CD4-positive, alpha-beta memory T cell (primary cell): ENCODE measurements at regions of chr18 and their contacts with region 1.

Region 1: DNA sequence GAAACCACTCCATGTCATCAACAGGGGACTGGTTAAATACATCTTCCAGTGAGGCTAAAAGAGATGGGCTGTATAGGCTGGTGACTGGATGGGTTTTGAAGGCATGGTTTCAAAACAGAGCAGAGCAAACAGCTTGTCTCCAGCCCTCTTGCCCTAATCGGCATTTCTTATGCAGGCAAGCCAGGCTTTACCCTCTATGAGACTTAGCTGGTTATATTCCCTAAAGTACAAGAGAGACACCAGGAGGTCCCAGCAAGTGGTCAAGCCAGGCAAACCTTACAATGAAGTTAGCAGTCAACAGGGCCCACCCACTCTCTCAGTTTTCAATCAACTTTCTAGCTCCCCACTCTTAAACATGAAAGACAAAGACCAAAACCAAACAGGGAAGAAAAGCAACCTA is 19.0 kb downstream of the OSBPL1A start:
- DNase-seq: no peak
- H3K4me3 ChIP-seq: no peak overlapping the region
- H3K4me3 Mint-ChIP-seq: no peak overlapping the region
- H3K27ac ChIP-seq: no peak overlapping the region
- H3K27ac Mint-ChIP-seq: no peak overlapping the region
- H3K4me1 ChIP-seq: no peaks in the 10 kb centered on the region
- H3K4me1 Mint-ChIP-seq: peaks cover 0 to 3% (median 0%) of the 10 kb centered on the region in 4 donors
- H3K27me3 ChIP-seq: no peaks in the 10 kb centered on the region
- H3K27me3 Mint-ChIP-seq: no peaks in the 10 kb centered on the region

Region 2: GRCh38 chr18:24306201-24306600 is 72.4 kb before region 1 on chr18:
- CTCF ChIA-PET with region 1: no interaction called
- POLR2A ChIA-PET with region 1: no interaction called
- intact Hi-C with region 1: no loop called
- DNase-seq: no peak
- H3K4me3 ChIP-seq: no peak overlapping the region
- H3K4me3 Mint-ChIP-seq: no peak overlapping the region
- H3K27ac ChIP-seq: no peak overlapping the region
- H3K27ac Mint-ChIP-seq: no peak overlapping the region
- H3K4me1 ChIP-seq: no peaks in the 10 kb centered on the region
- H3K4me1 Mint-ChIP-seq: no peaks in the 10 kb centered on the region
- H3K27me3 ChIP-seq: no peaks in the 10 kb centered on the region
- H3K27me3 Mint-ChIP-seq: peaks cover 0 to 1% of the 10 kb centered on the region in 2 donors

Region 3: DNA sequence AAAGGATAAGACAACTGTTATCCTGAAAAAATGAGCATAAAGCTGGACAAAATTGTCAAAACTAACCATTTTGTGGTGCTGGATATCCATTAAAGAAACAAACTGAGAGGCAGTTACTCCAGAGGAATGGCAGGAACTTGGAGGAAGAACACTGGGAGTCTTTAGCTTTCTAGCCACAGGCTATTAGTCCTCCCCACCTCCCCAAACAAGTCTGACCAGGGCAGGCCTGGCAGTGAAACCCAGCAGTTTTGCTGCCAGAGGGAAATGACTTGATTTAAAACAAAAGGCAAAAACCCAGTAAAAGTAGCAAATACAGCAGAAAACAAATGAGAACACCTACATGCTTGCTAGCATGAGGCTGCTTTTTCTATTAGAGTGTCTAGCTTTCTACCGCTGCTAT is 15.8 kb before region 1 on chr18:
- CTCF ChIA-PET with region 1: interaction called, 15 read pairs
- POLR2A ChIA-PET with region 1: no interaction called
- intact Hi-C with region 1: no loop called
- DNase-seq: no peak
- H3K4me3 ChIP-seq: no peak overlapping the region
- H3K4me3 Mint-ChIP-seq: no peak overlapping the region
- H3K27ac ChIP-seq: no peak overlapping the region
- H3K27ac Mint-ChIP-seq: no peak overlapping the region
- H3K4me1 ChIP-seq: no peaks in the 10 kb centered on the region
- H3K4me1 Mint-ChIP-seq: no peaks in the 10 kb centered on the region
- H3K27me3 ChIP-seq: no peaks in the 10 kb centered on the region
- H3K27me3 Mint-ChIP-seq: no peaks in the 10 kb centered on the region

Region 4: GRCh38 chr18:24395049-24395795 is 16.6 kb after region 1 on chr18:
- CTCF ChIA-PET with region 1: no interaction called
- POLR2A ChIA-PET with region 1: no interaction called
- intact Hi-C with region 1: no loop called
- DNase-seq: no peak
- H3K4me3 ChIP-seq: no peak overlapping the region
- H3K4me3 Mint-ChIP-seq: peak overlapping the region in 2 of 8 donors; percentile 12 to 30
- H3K27ac ChIP-seq: no peak overlapping the region
- H3K27ac Mint-ChIP-seq: peak overlapping the region in 2 of 7 donors; percentile 13 to 57
- H3K4me1 ChIP-seq: peaks cover 12% of the 10 kb centered on the region
- H3K4me1 Mint-ChIP-seq: peaks cover 6 to 16% (median 13%) of the 10 kb centered on the region in 4 donors
- H3K27me3 ChIP-seq: no peaks in the 10 kb centered on the region
- H3K27me3 Mint-ChIP-seq: peaks cover 0 to 12% of the 10 kb centered on the region in 2 donors

Region 5: GRCh38 chr18:24413148-24413547 is 34.5 kb after region 1 on chr18:
- CTCF ChIA-PET with region 1: no interaction called
- POLR2A ChIA-PET with region 1: no interaction called
- intact Hi-C with region 1: no loop called
- DNase-seq: no peak
- H3K4me3 ChIP-seq: no peak overlapping the region
- H3K4me3 Mint-ChIP-seq: no peak overlapping the region
- H3K27ac ChIP-seq: no peak overlapping the region
- H3K27ac Mint-ChIP-seq: no peak overlapping the region
- H3K4me1 ChIP-seq: no peaks in the 10 kb centered on the region
- H3K4me1 Mint-ChIP-seq: peaks cover 0 to 7% (median under 1%) of the 10 kb centered on the region in 4 donors
- H3K27me3 ChIP-seq: no peaks in the 10 kb centered on the region
- H3K27me3 Mint-ChIP-seq: peaks cover 11 to 41% of the 10 kb centered on the region in 2 donors